CD14-positive monocyte (primary cell): ENCODE measurements at regions of chr1 and their contacts with region 1.

Region 1: GRCh38 chr1:16055613-16056520 is 12.3 kb downstream of the CLCNKB start:
- DNase-seq: peak; percentile 56 to 69 (median 61)
- H3K4me3 ChIP-seq: no peak overlapping the region
- H3K4me3 Mint-ChIP-seq: no peak overlapping the region
- H3K27ac ChIP-seq: no peak overlapping the region
- H3K27ac Mint-ChIP-seq: no peak overlapping the region
- H3K4me1 ChIP-seq: peaks cover 0 to 3% of the 10 kb centered on the region in 2 donors
- H3K4me1 Mint-ChIP-seq: peaks cover 4% of the 10 kb centered on the region
- H3K27me3 ChIP-seq: no peaks in the 10 kb centered on the region
- H3K27me3 Mint-ChIP-seq: peaks cover 2 to 10% (median 5%) of the 10 kb centered on the region in 3 donors
- CTCF ChIP-seq: peak; percentile 98

Region 2: GRCh38 chr1:16032388-16033103 is 23.3 kb before region 1 on chr1:
- intact Hi-C with region 1: loop called in 1 of 2 experiments (anchors 2 kb)
- DNase-seq: peak; percentile 60 to 77 (median 70)
- H3K4me3 ChIP-seq: no peak overlapping the region
- H3K4me3 Mint-ChIP-seq: no peak overlapping the region
- H3K27ac ChIP-seq: no peak overlapping the region
- H3K27ac Mint-ChIP-seq: peak overlapping the region in 1 of 7 donors; percentile 40
- H3K4me1 ChIP-seq: no peaks in the 10 kb centered on the region
- H3K4me1 Mint-ChIP-seq: peaks cover 4% of the 10 kb centered on the region
- H3K27me3 ChIP-seq: peaks cover 0 to 5% of the 10 kb centered on the region in 2 donors
- H3K27me3 Mint-ChIP-seq: peaks cover 4 to 21% (median 8%) of the 10 kb centered on the region in 3 donors
- CTCF ChIP-seq: peak; percentile 91